ENCODE measurements at regions of chr3 and their contacts with region 1.

Region 1: DNA sequence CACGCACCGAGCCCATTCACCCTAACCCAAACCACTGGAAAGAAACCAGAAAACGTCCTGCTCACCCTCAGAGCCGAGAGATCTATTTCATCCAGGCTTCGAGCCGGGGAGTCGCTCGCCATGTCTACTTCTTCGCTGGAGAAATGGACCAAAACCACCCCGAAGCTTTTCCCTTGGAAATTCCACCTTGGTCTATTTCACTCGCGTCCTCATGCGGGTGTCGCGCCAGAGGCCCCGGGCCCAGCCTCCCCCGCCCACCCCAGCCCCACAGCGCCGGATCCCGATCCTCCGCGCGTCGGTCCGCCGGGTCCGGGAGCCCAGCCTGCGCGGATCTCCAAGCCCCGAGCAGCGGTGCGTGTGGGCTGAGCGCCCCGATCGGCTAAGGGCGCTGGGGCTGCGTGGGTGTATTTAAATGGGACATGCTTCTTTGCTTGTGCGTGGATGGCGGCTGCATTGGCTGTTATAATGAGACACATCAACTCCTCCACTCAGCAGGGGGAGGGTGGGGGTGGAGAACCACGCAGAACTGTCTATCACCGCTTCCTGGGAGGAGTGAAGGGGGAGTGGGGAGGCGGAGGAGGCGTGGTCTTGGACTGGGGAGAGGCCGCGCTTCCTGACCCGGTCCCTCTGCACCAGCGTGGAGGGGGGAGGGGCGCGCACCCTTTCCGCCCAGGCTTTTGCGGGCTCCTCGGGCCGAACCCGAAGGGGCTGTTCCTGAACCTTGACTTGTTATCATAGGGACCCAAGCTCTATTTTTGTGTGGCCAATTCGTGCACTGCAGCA is at the start of gene TNIK:
- DNase-seq: peak; percentile 84 to 97
- ATAC-seq: peak; percentile 85 to 94 (median 87)
- H3K4me3 ChIP-seq: peak within 1 kb of the TSS; percentile 93
- H3K4me3 Mint-ChIP-seq: peak within 1 kb of the TSS; percentile 93
- H3K27ac ChIP-seq: peak within 1 kb of the TSS; percentile 62
- H3K27ac Mint-ChIP-seq: peak within 1 kb of the TSS in 1 of 2 donors; percentile 97
- H3K4me1 ChIP-seq: peaks cover 35% of the 10 kb centered on the region
- H3K4me1 Mint-ChIP-seq: peaks cover 19 to 64% of the 10 kb centered on the region in 2 donors
- H3K27me3 ChIP-seq: no peaks in the 10 kb centered on the region
- H3K27me3 Mint-ChIP-seq: no peaks in the 10 kb centered on the region
- CTCF ChIP-seq: peak; percentile 37
- total RNA-seq, gene TNIK: 93.7 to 122 (median 119) TPM

Region 2: GRCh38 chr3:170908235-170909116 is 551.7 kb before region 1 on chr3 and contains the start of gene EIF5A2:
- intact Hi-C with region 1: loop called (anchors 5 kb)
- DNase-seq: peak; percentile 91 to 98
- ATAC-seq: peak; percentile 92 to 98 (median 94)
- H3K4me3 ChIP-seq: peak within 1 kb of the TSS; percentile 71
- H3K4me3 Mint-ChIP-seq: peak within 1 kb of the TSS; percentile 98
- H3K27ac ChIP-seq: peak within 1 kb of the TSS; percentile 80
- H3K27ac Mint-ChIP-seq: peak within 1 kb of the TSS; percentile 87 to 89
- H3K4me1 ChIP-seq: peaks cover 14% of the 10 kb centered on the region
- H3K4me1 Mint-ChIP-seq: peaks cover 23 to 29% of the 10 kb centered on the region in 2 donors
- H3K27me3 ChIP-seq: no peaks in the 10 kb centered on the region
- H3K27me3 Mint-ChIP-seq: no peaks in the 10 kb centered on the region
- CTCF ChIP-seq: no peak
- total RNA-seq, gene EIF5A2: 12.9 to 34.8 (median 22.8) TPM

Region 3: GRCh38 chr3:171187706-171188290 is 272.3 kb before region 1 on chr3:
- intact Hi-C with region 1: loop called (anchors 10 kb)
- DNase-seq: peak in 1 of 2 donors; percentile 65
- ATAC-seq: peak in 2 of 3 donors; percentile 64 to 66
- H3K4me3 ChIP-seq: no peak overlapping the region
- H3K4me3 Mint-ChIP-seq: no peak overlapping the region
- H3K27ac ChIP-seq: no peak overlapping the region
- H3K27ac Mint-ChIP-seq: no peak overlapping the region
- H3K4me1 ChIP-seq: no peaks in the 10 kb centered on the region
- H3K4me1 Mint-ChIP-seq: peaks cover 11 to 14% of the 10 kb centered on the region in 2 donors
- H3K27me3 ChIP-seq: no peaks in the 10 kb centered on the region
- H3K27me3 Mint-ChIP-seq: no peaks in the 10 kb centered on the region
- CTCF ChIP-seq: peak; percentile 61

Region 4: GRCh38 chr3:171480526-171480925 is 20.4 kb after region 1 on chr3:
- intact Hi-C with region 1: loop called (anchors 1 kb)
- DNase-seq: peak in 1 of 2 donors; percentile 51
- ATAC-seq: peak; percentile 86 to 95 (median 94)
- H3K4me3 ChIP-seq: no peak overlapping the region
- H3K4me3 Mint-ChIP-seq: peak overlapping the region; percentile 6
- H3K27ac ChIP-seq: peak overlapping the region; percentile 59
- H3K27ac Mint-ChIP-seq: peak overlapping the region; percentile 52 to 87
- H3K4me1 ChIP-seq: peaks cover 14% of the 10 kb centered on the region
- H3K4me1 Mint-ChIP-seq: peaks cover 11 to 13% of the 10 kb centered on the region in 2 donors
- H3K27me3 ChIP-seq: no peaks in the 10 kb centered on the region
- H3K27me3 Mint-ChIP-seq: no peaks in the 10 kb centered on the region
- CTCF ChIP-seq: no peak

Region 5: GRCh38 chr3:171591059-171591458 is 130.9 kb after region 1 on chr3:
- intact Hi-C with region 1: no loop called
- DNase-seq: no peak
- ATAC-seq: no peak
- H3K4me3 ChIP-seq: no peak overlapping the region
- H3K4me3 Mint-ChIP-seq: no peak overlapping the region
- H3K27ac ChIP-seq: no peak overlapping the region
- H3K27ac Mint-ChIP-seq: no peak overlapping the region
- H3K4me1 ChIP-seq: no peaks in the 10 kb centered on the region
- H3K4me1 Mint-ChIP-seq: no peaks in the 10 kb centered on the region
- H3K27me3 ChIP-seq: no peaks in the 10 kb centered on the region
- H3K27me3 Mint-ChIP-seq: peaks cover 0 to 9% of the 10 kb centered on the region in 2 donors
- CTCF ChIP-seq: no peak

Region 6: GRCh38 chr3:171809821-171810628 is 349.9 kb after region 1 on chr3 and contains the start of gene PLD1:
- intact Hi-C with region 1: loop called (anchors 5 kb)
- DNase-seq: peak; percentile 58 to 65
- ATAC-seq: peak; percentile 67 to 86 (median 81)
- H3K4me3 ChIP-seq: peak within 1 kb of the TSS; percentile 73
- H3K4me3 Mint-ChIP-seq: peak within 1 kb of the TSS; percentile 93
- H3K27ac ChIP-seq: peak within 1 kb of the TSS; percentile 58
- H3K27ac Mint-ChIP-seq: peak within 1 kb of the TSS; percentile 80 to 93
- H3K4me1 ChIP-seq: peaks cover 19% of the 10 kb centered on the region
- H3K4me1 Mint-ChIP-seq: peaks cover 42 to 47% of the 10 kb centered on the region in 2 donors
- H3K27me3 ChIP-seq: no peaks in the 10 kb centered on the region
- H3K27me3 Mint-ChIP-seq: no peaks in the 10 kb centered on the region
- CTCF ChIP-seq: no peak
- total RNA-seq, gene PLD1: 13.2 to 26.3 (median 17.1) TPM

Measured in natural killer cell (primary cell).